ENCODE measurements at regions of chr11 and their contacts with region 1.

Region 1: GRCh38 chr11:27672836-27673464 is 27.3 kb downstream of the BDNF start:
- DNase-seq: peak; percentile 15
- ATAC-seq: no peak
- H3K4me3 ChIP-seq: no peak overlapping the region
- H3K27ac ChIP-seq: no peak overlapping the region
- H3K4me1 ChIP-seq: 0 out of 2 replicates have a peak, but pooled peaks cover 4% of the 10 kb centered on the region
- H3K27me3 ChIP-seq: no peaks in the 10 kb centered on the region
- CTCF ChIP-seq: no peak

Region 2: GRCh38 chr11:27524155-27524554 is 148.8 kb before region 1 on chr11:
- CTCF ChIA-PET with region 1: no interaction called
- POLR2A ChIA-PET with region 1: no interaction called
- intact Hi-C with region 1: loop called (anchors 10 kb)
- DNase-seq: peak; percentile 35
- ATAC-seq: no peak; the same call in 1 of the 2 replicates
- H3K4me3 ChIP-seq: no peak overlapping the region
- H3K27ac ChIP-seq: no peak overlapping the region
- H3K4me1 ChIP-seq: no peaks in the 10 kb centered on the region
- H3K27me3 ChIP-seq: no peaks in the 10 kb centered on the region
- CTCF ChIP-seq: peak; percentile 39

Measured in PC-3 (cell line).